ENCODE measurements at regions of chr13 and their contacts with region 1.

Region 1: GRCh38 chr13:60612593-60612992 is 215.6 kb downstream of the TDRD3 start:
- DNase-seq: no peak
- H3K4me3 ChIP-seq: no peak overlapping the region
- H3K27ac ChIP-seq: no peak overlapping the region
- H3K4me1 ChIP-seq: peaks cover 0 to under 1% (median 0%) of the 10 kb centered on the region in 4 experiments; a peak in 2 of 7 replicates
- H3K27me3 ChIP-seq: no peaks in the 10 kb centered on the region
- CTCF ChIP-seq: no peak
- EP300 ChIP-seq: no peak
- POLR2A ChIP-seq: no peak
- RAD21 ChIP-seq: no peak

Region 2: DNA sequence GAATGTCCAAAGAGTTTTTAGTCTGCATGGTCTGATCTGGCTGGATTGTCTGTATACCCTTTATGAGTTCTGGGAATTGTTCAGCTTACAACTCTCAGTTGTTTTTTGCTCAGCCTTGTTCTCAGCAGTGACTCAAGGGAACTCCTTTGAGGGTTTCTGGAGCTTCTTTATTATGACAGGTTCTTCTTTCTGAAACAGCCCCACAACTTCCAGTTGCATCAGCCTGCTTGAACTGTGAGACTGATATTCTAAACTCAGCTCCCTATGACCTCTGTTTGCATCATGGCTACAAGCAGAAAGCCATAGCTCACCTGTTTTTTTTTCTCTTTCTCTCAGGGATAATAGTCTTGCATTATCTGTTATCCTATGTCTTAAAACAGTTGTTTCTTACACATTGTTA is 130.6 kb before region 1 on chr13:
- CTCF ChIA-PET with region 1: interaction called, 29 read pairs
- POLR2A ChIA-PET with region 1: no interaction called
- DNase-seq: no peak
- H3K4me3 ChIP-seq: no peak overlapping the region
- H3K27ac ChIP-seq: no peak overlapping the region
- H3K4me1 ChIP-seq: no peaks in the 10 kb centered on the region
- H3K27me3 ChIP-seq: no peaks in the 10 kb centered on the region
- CTCF ChIP-seq: no peak
- EP300 ChIP-seq: no peak
- POLR2A ChIP-seq: no peak
- RAD21 ChIP-seq: no peak